Mammary epithelial cell (primary cell): ENCODE measurements at regions of chr22 and their contacts with region 1.

Region 1: GRCh38 chr22:43878079-43878795 is 13.6 kb downstream of the PNPLA5 start:
- DNase-seq: no peak
- H3K4me3 ChIP-seq: no peak overlapping the region
- H3K27ac ChIP-seq: no peak overlapping the region
- H3K4me1 ChIP-seq: no peaks in the 10 kb centered on the region
- H3K27me3 ChIP-seq: no peaks in the 10 kb centered on the region
- CTCF ChIP-seq: no peak

Region 2: GRCh38 chr22:44491269-44492035 is 613.2 kb after region 1 on chr22:
- CTCF ChIA-PET with region 1: interaction called, 11 read pairs
- dilution Hi-C with region 1: no loop called
- in situ Hi-C with region 1: no loop called
- intact Hi-C with region 1: no loop called
- DNase-seq: no peak
- H3K4me3 ChIP-seq: no peak overlapping the region
- H3K27ac ChIP-seq: no peak overlapping the region
- H3K4me1 ChIP-seq: no peaks in the 10 kb centered on the region
- H3K27me3 ChIP-seq: no peaks in the 10 kb centered on the region
- CTCF ChIP-seq: no peak